Endothelial cell of umbilical vein (primary cell): ENCODE measurements at regions of chr19 and their contacts with region 1.

Region 1: GRCh38 chr19:16247353-16248182 is 49.9 kb downstream of the AP1M1 start:
- DNase-seq: peak; percentile 78
- H3K4me3 ChIP-seq: no peak overlapping the region
- H3K27ac ChIP-seq: no peak overlapping the region
- H3K4me1 ChIP-seq: no peaks in the 10 kb centered on the region
- H3K27me3 ChIP-seq: no peaks in the 10 kb centered on the region
- CTCF ChIP-seq: peak; percentile 94 to 95
- POLR2A ChIP-seq: no peak

Region 2: DNA sequence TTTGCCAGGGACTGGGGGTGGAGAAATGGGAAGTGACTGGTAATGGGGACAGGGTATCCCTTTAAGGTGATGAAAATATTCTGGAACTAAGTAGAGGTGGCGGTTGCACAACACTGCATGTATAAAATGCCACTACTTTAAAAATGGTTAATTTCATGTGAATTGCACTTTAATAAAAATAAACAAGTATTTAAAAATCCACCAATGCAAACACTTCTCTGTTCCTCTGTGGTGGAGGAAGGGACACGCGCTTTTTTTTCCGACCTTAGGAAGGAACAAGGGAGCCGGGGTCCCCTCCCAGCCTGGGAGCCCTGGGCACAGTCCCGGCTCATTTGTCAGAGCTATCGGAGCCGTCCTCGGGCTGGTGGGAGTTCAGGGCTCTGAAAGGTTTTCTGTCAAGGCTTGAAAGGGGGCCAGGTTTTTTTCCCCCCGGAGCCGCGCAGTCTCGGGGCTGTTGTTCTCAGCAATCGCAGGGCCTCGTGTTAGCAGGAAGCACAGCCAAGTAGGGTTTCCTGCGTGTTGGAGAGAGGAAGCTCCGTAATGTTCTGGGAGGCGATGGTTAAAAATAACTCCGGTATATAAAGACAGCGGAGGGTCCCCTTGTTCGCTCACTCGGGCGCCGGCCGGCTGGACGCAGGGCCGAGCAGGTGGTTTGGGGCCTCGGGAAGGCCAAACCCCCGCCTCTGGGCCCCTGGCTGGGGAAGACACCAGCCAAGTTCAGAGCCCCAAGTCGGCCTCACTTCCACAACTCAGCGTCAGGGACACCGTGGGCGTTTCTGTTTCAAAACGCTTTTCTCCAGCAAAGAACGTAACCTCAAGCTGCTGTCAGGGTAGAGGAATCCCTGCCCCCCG is 35.9 kb after region 1 on chr19:
- CTCF ChIA-PET with region 1: no interaction called
- POLR2A ChIA-PET with region 1: no interaction called
- dilution Hi-C with region 1: no loop called
- intact Hi-C with region 1: loop called (anchors 5 kb)
- DNase-seq: peak; percentile 97
- H3K4me3 ChIP-seq: peak overlapping the region in 1 of 3 experiments; percentile 2
- H3K27ac ChIP-seq: peak overlapping the region; percentile 97
- H3K4me1 ChIP-seq: peaks cover 28% of the 10 kb centered on the region
- H3K27me3 ChIP-seq: no peaks in the 10 kb centered on the region
- CTCF ChIP-seq: no peak
- POLR2A ChIP-seq: peak; percentile 94

Region 3: GRCh38 chr19:16330368-16330801 is 82.8 kb after region 1 on chr19:
- CTCF ChIA-PET with region 1: interaction called, 36 read pairs
- POLR2A ChIA-PET with region 1: interaction called, 3 read pairs
- dilution Hi-C with region 1: no loop called
- intact Hi-C with region 1: loop called (anchors 1 kb)
- DNase-seq: peak; percentile 81
- H3K4me3 ChIP-seq: no peak overlapping the region
- H3K27ac ChIP-seq: no peak overlapping the region
- H3K4me1 ChIP-seq: peaks cover 28% of the 10 kb centered on the region
- H3K27me3 ChIP-seq: no peaks in the 10 kb centered on the region
- CTCF ChIP-seq: no peak
- POLR2A ChIP-seq: no peak

Region 4: DNA sequence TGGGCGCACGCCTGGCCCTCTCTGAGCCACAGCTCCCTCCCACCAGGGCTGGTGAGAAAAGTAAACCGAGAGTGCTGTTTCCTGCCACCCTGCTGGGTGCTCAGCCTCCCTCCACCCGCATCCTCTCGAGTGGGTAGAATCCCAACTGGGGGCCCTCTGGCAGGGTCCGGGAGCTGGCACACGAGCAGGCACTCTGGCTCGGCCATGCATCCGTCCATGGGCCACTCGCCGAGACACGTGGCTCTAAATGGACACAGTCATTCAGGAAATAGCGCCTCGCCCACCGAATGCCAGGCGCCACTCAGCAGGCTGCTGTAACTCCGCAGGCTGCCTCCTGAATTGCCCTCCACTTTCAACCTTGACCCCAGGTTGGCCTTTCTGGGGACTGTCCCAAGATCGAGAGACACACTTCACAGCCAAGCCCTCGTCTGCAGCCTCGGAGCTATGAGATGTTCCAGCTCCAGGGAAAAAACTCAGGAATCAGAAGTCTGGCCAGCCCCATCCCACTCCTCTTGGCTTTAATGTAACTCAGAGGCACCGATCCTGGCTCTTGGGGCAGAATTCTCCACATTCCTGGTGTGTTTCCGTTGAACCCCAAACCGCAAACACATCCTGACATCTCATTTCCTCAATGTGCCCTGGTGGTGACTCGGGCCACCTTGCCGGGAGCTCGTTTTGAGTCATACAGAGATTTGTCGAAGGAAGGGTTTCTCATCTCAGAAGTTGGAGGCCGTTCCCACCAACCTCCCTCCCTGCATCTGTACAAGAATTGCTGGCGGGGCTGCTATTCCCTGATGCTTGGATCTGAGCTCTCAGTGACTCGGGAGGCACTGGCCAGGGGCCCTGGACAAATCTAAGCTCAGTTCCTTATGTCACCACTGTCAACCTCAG is 91.1 kb after region 1 on chr19:
- CTCF ChIA-PET with region 1: interaction called, 12 read pairs
- POLR2A ChIA-PET with region 1: no interaction called
- dilution Hi-C with region 1: no loop called
- intact Hi-C with region 1: no loop called
- DNase-seq: peak; percentile 86
- H3K4me3 ChIP-seq: no peak overlapping the region
- H3K27ac ChIP-seq: peak overlapping the region; percentile 91
- H3K4me1 ChIP-seq: peaks cover 34% of the 10 kb centered on the region
- H3K27me3 ChIP-seq: no peaks in the 10 kb centered on the region
- CTCF ChIP-seq: peak in 1 of 2 donors; percentile 4
- POLR2A ChIP-seq: no peak

Region 5: GRCh38 chr19:16376649-16377048 is 129.1 kb after region 1 on chr19:
- CTCF ChIA-PET with region 1: interaction called, 186 read pairs
- POLR2A ChIA-PET with region 1: no interaction called
- dilution Hi-C with region 1: no loop called
- intact Hi-C with region 1: no loop called
- DNase-seq: no peak
- H3K4me3 ChIP-seq: no peak overlapping the region
- H3K27ac ChIP-seq: no peak overlapping the region
- H3K4me1 ChIP-seq: peaks cover 13% of the 10 kb centered on the region
- H3K27me3 ChIP-seq: no peaks in the 10 kb centered on the region
- CTCF ChIP-seq: peak; percentile 40 to 62
- POLR2A ChIP-seq: no peak

Region 6: DNA sequence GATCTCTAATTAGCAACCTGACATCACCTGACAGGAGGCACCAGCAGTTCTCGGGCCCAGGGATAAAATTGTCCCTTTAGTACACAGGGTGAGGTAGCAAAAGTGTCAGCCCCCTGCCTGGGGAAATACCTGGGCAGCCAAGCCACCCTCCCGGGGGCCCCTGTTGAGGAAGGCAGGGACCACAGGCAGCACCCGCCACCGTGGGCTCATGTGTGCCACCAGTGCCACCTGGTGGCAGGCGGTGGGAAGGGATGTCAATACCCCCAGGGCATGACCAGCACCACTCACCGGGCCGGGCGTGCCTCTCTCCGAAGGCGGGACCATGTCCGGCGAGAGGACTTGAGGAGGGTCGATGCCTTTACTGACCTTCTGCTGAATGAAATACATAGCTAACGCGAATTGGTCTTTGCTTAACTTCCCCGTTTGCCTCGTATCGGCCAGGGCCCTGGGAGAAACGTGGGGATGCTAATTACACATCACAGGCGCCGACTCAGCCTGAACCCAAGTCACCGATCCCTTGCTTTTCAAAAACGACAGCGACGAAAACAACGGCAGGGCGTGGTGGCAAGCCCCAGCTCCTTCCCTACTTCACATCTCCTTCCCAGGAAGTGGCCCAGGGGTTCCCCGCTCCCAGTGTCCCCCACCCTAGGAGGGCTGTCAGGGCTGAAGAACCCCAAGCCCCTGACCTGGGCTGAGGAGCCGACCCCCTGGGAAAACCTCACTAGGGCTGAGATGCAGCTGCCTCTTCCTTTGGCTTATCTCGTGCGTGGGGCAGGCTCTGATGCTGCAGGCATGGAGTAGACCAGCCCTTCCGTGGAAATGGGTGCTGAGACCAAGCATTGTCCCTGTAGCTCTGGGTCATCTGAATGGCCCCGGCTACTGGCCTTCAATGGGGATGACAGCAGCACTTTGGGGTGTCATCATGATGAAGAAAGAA is 170.4 kb after region 1 on chr19:
- CTCF ChIA-PET with region 1: no interaction called
- POLR2A ChIA-PET with region 1: no interaction called
- dilution Hi-C with region 1: no loop called
- intact Hi-C with region 1: loop called (anchors 1 kb)
- DNase-seq: peak; percentile 51
- H3K4me3 ChIP-seq: no peak overlapping the region
- H3K27ac ChIP-seq: no peak overlapping the region
- H3K4me1 ChIP-seq: peaks cover 14% of the 10 kb centered on the region
- H3K27me3 ChIP-seq: no peaks in the 10 kb centered on the region
- CTCF ChIP-seq: peak; percentile 87 to 95
- POLR2A ChIP-seq: no peak